Activated B cell treated with CpG ODN at 0.5 μM for 24 hours (primary cell): ENCODE measurements at regions of chr4 and their contacts with region 1.

Region 1: DNA sequence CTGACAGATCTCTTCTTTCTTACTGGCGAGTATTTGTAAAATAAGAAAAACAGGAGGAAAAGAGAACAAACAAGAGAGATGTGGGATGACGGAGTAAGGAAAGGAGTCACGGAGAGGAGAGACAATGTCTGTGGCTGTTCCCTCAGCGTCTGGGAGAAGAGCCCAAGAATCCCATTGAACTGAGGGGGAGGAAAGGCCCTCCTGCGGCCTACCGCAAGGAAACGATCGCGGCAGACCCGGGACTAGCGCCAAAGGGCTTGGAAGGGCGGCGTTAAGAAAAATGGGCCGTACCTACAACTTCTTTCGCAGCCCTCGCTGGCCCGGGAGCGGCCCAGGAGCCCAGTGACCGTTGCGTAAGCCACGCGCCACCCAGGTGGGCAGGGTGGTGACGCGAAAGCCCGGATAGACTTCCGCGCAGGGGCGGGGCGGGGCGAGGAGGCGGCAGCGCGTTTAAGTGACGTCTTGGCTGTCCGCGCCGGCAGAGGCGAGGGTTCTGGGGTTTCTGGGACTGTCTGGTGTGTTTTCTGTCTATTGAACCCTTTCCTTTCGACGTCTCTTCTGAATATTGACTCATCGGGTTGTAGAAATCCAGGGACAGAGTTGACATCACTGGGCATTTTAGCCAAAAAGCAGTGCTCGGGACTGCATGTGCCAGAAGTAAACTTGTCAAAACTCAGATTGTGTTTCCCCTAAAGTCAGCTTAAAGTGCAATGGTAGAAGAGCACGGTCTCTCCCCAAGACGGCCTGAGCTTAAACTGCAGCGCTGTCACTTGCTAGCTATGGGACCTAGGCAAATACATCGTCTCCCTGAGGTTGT is at the start of gene SLC9B1:
- DNase-seq: peak; percentile 91
- ATAC-seq: peak; percentile 98
- H3K4me3 Mint-ChIP-seq: peak within 1 kb of the TSS; percentile 92
- H3K27ac Mint-ChIP-seq: peak within 1 kb of the TSS; percentile 96
- H3K4me1 Mint-ChIP-seq: peaks cover 28% of the 10 kb centered on the region
- H3K27me3 Mint-ChIP-seq: no peaks in the 10 kb centered on the region
- CTCF ChIP-seq: no peak
- total RNA-seq, gene SLC9B1: 1.2 and 2.5 TPM in 2 replicates

Region 2: GRCh38 chr4:102687373-102687981 is 332.0 kb before region 1 on chr4:
- CTCF ChIA-PET with region 1: no interaction called
- POLR2A ChIA-PET with region 1: no interaction called
- intact Hi-C with region 1: loop called (anchors 5 kb)
- DNase-seq: no peak
- ATAC-seq: peak; percentile 74
- H3K4me3 Mint-ChIP-seq: no peak overlapping the region
- H3K27ac Mint-ChIP-seq: no peak overlapping the region
- H3K4me1 Mint-ChIP-seq: no peaks in the 10 kb centered on the region
- H3K27me3 Mint-ChIP-seq: no peaks in the 10 kb centered on the region
- CTCF ChIP-seq: no peak

Region 3: DNA sequence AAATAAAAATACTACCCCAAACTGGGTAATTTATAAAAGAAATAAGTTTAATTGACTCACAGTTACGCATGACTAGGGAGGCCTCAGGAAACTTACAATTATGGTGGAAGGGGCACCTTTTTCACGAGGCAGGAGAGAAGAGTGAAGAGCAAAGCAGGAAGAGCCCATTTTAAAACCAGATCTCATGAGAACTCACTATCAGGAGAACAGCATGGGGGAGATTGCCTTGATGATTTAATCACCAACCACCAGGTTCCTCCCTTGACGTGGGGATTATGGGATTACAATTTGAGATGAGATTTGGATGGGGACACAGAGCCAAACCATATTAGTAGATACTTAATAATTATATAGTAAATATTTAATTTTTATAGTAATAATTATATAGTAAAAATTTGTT is 140.6 kb before region 1 on chr4:
- CTCF ChIA-PET with region 1: no interaction called
- POLR2A ChIA-PET with region 1: no interaction called
- intact Hi-C with region 1: no loop called
- DNase-seq: no peak
- ATAC-seq: no peak
- H3K4me3 Mint-ChIP-seq: no peak overlapping the region
- H3K27ac Mint-ChIP-seq: no peak overlapping the region
- H3K4me1 Mint-ChIP-seq: peaks cover 5% of the 10 kb centered on the region
- H3K27me3 Mint-ChIP-seq: no peaks in the 10 kb centered on the region
- CTCF ChIP-seq: no peak

Region 4: DNA sequence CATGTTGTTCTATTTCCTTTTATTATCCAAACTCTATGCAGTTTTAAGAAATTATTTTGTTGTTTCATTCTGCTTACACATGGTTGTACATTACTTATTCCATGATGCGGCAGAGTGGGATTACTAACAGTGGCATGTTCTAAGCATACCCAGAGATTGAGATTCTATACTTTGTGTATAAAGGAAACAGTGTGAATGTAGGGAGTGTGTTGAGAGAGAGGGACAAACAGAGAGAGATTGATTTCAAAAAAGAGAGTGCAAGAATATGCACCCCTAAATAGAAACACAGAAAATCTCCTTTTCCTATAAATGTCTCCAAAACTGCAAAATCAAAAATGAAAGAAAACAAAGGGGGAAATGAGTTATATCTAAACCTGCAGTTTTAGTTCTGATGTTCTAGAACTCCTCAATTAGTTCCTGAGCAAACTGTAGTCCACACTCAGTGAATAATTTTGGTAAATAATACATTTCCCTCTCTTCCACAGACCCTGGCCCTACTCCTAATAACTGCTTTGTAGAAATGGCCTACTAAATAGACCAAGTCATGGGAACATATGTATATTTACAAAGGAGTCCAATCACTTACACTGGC is 31.0 kb before region 1 on chr4:
- CTCF ChIA-PET with region 1: no interaction called
- POLR2A ChIA-PET with region 1: no interaction called
- intact Hi-C with region 1: no loop called
- DNase-seq: no peak
- ATAC-seq: no peak
- H3K4me3 Mint-ChIP-seq: no peak overlapping the region
- H3K27ac Mint-ChIP-seq: no peak overlapping the region
- H3K4me1 Mint-ChIP-seq: no peaks in the 10 kb centered on the region
- H3K27me3 Mint-ChIP-seq: no peaks in the 10 kb centered on the region
- CTCF ChIP-seq: no peak

Region 5: GRCh38 chr4:103075901-103076739 is 56.6 kb after region 1 on chr4:
- CTCF ChIA-PET with region 1: no interaction called
- POLR2A ChIA-PET with region 1: interaction called, 5 read pairs
- intact Hi-C with region 1: loop called (anchors 1 kb)
- DNase-seq: peak; percentile 69
- ATAC-seq: peak; percentile 64
- H3K4me3 Mint-ChIP-seq: peak overlapping the region; percentile 96
- H3K27ac Mint-ChIP-seq: peak overlapping the region; percentile 99
- H3K4me1 Mint-ChIP-seq: peaks cover 45% of the 10 kb centered on the region
- H3K27me3 Mint-ChIP-seq: no peaks in the 10 kb centered on the region
- CTCF ChIP-seq: no peak

Region 6: DNA sequence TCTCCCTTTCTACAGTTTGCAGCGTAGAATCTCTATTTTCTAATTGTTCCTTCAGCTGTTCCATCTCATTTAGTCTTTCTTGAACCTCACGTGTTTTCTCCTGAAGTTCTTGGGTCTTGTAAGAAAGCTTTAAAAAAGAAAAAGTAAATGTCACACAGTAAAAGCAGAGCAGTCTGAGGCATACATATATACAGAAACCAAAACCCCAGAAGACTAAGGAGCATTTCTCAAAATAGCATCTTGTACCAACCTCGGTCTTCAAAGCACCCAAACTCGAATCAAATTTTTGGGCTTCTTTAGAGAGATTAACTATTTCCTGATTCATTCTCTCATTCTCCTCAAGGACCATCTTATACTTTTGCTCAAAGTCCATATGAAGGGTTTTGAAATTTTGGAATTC is 139.2 kb after region 1 on chr4:
- CTCF ChIA-PET with region 1: no interaction called
- POLR2A ChIA-PET with region 1: no interaction called
- intact Hi-C with region 1: no loop called
- DNase-seq: no peak
- ATAC-seq: no peak
- H3K4me3 Mint-ChIP-seq: no peak overlapping the region
- H3K27ac Mint-ChIP-seq: no peak overlapping the region
- H3K4me1 Mint-ChIP-seq: peaks cover 10% of the 10 kb centered on the region
- H3K27me3 Mint-ChIP-seq: no peaks in the 10 kb centered on the region
- CTCF ChIP-seq: no peak

Region 7: GRCh38 chr4:103198111-103198765 is 178.7 kb after region 1 on chr4 and contains the start of gene CENPE:
- CTCF ChIA-PET with region 1: no interaction called
- POLR2A ChIA-PET with region 1: no interaction called
- intact Hi-C with region 1: loop called (anchors 1 kb)
- DNase-seq: peak; percentile 83
- ATAC-seq: peak; percentile 94
- H3K4me3 Mint-ChIP-seq: peak within 1 kb of the TSS; percentile 93
- H3K27ac Mint-ChIP-seq: peak within 1 kb of the TSS; percentile 91
- H3K4me1 Mint-ChIP-seq: peaks cover 10% of the 10 kb centered on the region
- H3K27me3 Mint-ChIP-seq: no peaks in the 10 kb centered on the region
- CTCF ChIP-seq: no peak
- total RNA-seq, gene CENPE: 2.4 and 2.5 TPM in 2 replicates